Mammary epithelial cell (primary cell): ENCODE measurements at regions of chr12 and their contacts with region 1.

Region 1: DNA sequence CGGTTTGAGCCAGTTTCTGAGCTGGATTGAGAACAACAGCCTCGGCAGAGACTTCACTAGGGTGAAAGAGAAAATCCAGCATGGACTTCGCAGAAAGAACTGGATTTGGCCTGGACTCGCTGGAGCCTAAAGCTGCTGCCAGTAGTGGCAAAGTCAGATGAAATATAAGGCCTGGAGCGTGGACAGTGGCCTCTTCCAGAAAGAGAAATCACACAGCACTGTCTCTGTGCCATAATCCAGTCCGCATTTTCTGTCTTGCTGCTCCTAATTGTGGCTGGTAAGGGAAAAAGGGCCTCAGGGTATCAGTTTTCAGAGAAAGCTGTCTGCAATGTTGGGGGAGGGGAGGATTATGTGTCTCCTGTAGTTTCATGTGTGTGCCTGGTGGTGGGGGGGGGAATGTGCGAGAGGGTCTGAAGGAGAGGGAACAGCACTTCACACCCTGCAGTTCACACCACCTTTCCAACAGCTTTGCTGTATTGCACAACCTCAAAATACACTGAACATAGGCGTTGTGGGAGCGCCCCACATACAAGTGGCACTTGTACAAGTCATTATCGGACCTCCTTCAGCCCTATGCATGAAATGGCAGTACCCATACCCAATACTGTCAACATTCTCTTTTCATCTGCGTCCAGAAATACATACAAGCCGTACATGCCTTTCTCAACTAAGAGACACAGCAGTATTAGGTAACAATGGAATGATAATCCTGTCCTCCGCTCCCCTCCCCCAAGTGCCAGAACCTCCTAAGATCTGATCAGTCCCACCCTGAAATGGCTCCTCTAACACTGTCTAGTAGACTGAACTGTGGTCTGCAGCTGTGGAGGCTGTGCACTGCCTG is 107.5 kb upstream of the ATF7IP start:
- DNase-seq: peak; percentile 96
- H3K4me3 ChIP-seq: no peak overlapping the region
- H3K27ac ChIP-seq: peak overlapping the region; percentile 69
- H3K4me1 ChIP-seq: peaks cover 32% of the 10 kb centered on the region
- H3K27me3 ChIP-seq: no peaks in the 10 kb centered on the region
- CTCF ChIP-seq: no peak

Region 2: GRCh38 chr12:13635709-13636108 is 622.2 kb before region 1 on chr12:
- CTCF ChIA-PET with region 1: no interaction called
- dilution Hi-C with region 1: no loop called
- in situ Hi-C with region 1: no loop called
- intact Hi-C with region 1: no loop called
- DNase-seq: no peak
- H3K4me3 ChIP-seq: no peak overlapping the region
- H3K27ac ChIP-seq: no peak overlapping the region
- H3K4me1 ChIP-seq: no peaks in the 10 kb centered on the region
- H3K27me3 ChIP-seq: peaks cover 2% of the 10 kb centered on the region
- CTCF ChIP-seq: no peak

Region 3: DNA sequence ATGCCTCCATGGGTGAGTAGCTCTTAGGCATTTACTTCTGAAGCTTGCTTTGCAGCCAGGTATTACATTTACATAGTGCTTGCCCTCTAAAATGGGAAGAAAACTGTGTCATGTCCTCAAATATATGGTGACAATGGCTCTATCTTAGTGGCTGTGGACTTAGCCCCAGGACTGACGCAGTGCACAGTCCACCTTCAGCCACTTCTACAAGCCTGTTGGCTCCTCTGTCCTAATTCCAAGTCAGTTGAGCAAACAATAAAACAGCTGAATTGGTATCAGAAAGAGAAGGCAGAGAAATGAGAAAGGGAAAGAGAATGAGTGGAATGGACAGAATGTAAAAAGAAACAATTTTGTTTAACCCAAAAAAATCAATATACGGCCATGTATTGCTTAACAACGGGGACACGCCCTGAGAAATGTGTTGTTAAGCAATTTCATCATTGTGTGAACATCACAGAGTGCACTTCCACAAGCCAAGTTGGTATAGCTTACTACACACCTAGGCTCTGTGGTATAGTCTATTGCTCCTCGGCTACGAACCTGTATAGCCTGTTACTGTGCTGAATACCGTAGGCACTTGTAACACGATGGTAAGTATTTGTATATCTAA is 370.1 kb before region 1 on chr12:
- CTCF ChIA-PET with region 1: no interaction called
- dilution Hi-C with region 1: no loop called
- in situ Hi-C with region 1: no loop called
- intact Hi-C with region 1: no loop called
- DNase-seq: no peak
- H3K4me3 ChIP-seq: no peak overlapping the region
- H3K27ac ChIP-seq: no peak overlapping the region
- H3K4me1 ChIP-seq: no peaks in the 10 kb centered on the region
- H3K27me3 ChIP-seq: no peaks in the 10 kb centered on the region
- CTCF ChIP-seq: no peak

Region 4: DNA sequence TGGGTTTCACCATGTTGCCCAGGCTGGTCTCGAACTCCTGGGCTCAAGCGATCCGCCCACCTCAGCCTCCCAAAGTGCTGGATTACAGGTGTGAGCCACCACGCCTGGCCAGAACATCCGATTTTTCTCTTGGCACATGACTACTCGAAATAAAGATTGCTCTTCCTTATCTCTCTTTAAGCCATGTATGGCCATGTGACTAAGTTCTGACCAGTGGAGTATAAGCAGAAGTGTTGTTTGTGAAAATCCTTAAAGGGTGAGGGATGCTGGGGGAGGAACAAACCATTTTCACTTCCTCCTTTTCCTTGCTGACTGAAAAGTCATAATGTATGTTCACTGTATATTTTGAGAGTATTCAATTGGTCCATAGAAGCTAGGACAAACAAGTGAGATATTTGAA is 56.8 kb after region 1 on chr12:
- CTCF ChIA-PET with region 1: no interaction called
- dilution Hi-C with region 1: no loop called
- in situ Hi-C with region 1: no loop called
- intact Hi-C with region 1: loop called (anchors 5 kb)
- DNase-seq: no peak
- H3K4me3 ChIP-seq: no peak overlapping the region
- H3K27ac ChIP-seq: no peak overlapping the region
- H3K4me1 ChIP-seq: peaks cover 10% of the 10 kb centered on the region
- H3K27me3 ChIP-seq: no peaks in the 10 kb centered on the region
- CTCF ChIP-seq: no peak

Region 5: GRCh38 chr12:14384783-14385638 is 127.1 kb after region 1 on chr12:
- CTCF ChIA-PET with region 1: no interaction called
- dilution Hi-C with region 1: no loop called
- in situ Hi-C with region 1: no loop called
- intact Hi-C with region 1: loop called (anchors 1 kb)
- DNase-seq: peak; percentile 92
- H3K4me3 ChIP-seq: peak overlapping the region; percentile 29 to 42 (median 31)
- H3K27ac ChIP-seq: peak overlapping the region; percentile 69
- H3K4me1 ChIP-seq: peaks cover 13% of the 10 kb centered on the region
- H3K27me3 ChIP-seq: no peaks in the 10 kb centered on the region
- CTCF ChIP-seq: no peak

Region 6: DNA sequence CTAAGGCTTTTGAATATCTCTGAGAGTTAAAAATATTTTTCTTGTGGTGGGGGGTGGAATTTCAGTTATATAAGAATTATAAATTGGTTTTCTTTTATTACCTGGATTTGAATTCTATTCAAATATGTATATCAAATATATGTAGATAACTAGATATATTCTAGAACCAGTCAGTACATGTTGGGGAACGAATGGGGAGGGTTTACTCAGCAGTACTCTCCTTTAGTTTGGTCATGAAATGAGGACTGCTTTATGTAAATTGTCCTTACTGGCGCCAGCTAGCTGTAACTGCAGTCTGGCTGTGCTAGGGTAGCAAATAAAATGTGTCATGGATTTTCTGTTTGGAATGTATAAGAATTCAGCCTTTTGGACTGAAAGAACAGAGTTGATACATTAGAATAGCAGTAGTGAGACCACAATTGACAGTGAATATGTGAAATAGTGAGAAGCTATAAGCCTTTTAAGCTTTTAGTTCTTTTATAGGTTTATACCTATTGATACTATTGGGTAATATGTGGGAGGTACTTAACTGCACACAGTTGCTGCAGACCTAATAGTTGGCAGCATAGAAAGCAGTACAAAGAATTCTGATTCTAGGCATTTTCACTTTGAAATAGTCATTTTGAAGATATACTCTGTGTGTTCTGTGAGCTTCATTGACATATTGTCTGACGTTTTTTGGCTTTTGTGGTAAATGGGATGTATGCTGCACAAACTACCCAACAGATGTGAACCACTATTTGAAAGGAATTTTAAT is 136.5 kb after region 1 on chr12:
- CTCF ChIA-PET with region 1: no interaction called
- dilution Hi-C with region 1: no loop called
- in situ Hi-C with region 1: no loop called
- intact Hi-C with region 1: loop called (anchors 1 kb)
- DNase-seq: peak; percentile 83
- H3K4me3 ChIP-seq: peak overlapping the region in 1 of 3 experiments; percentile 28
- H3K27ac ChIP-seq: peak overlapping the region; percentile 69
- H3K4me1 ChIP-seq: peaks cover 15% of the 10 kb centered on the region
- H3K27me3 ChIP-seq: no peaks in the 10 kb centered on the region
- CTCF ChIP-seq: no peak

Region 7: DNA sequence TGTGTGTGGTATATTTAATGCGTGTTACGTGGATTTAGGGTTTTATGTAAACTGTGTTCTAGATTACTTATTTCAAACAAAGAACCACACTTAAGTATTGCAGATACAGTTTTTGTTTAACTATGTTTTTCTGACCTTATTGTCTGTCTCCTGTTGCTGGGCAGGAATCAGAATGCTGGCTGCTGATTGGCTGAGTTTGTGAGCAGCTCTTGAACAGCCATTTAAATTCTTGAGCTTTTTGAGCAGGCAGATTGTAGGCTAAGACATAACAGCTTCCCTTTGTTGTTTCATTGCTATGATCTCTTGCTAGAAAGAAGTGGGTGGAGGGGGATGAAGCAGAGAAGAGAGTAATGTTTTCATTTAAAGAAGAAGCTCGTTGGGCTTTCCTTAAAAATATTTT is 159.8 kb after region 1 on chr12:
- CTCF ChIA-PET with region 1: no interaction called
- dilution Hi-C with region 1: no loop called
- in situ Hi-C with region 1: no loop called
- intact Hi-C with region 1: loop called (anchors 1 kb)
- DNase-seq: peak; percentile 74
- H3K4me3 ChIP-seq: no peak overlapping the region
- H3K27ac ChIP-seq: no peak overlapping the region
- H3K4me1 ChIP-seq: peaks cover 10% of the 10 kb centered on the region
- H3K27me3 ChIP-seq: no peaks in the 10 kb centered on the region
- CTCF ChIP-seq: no peak

Region 8: GRCh38 chr12:14454098-14454907 is 196.3 kb after region 1 on chr12:
- CTCF ChIA-PET with region 1: no interaction called
- dilution Hi-C with region 1: no loop called
- in situ Hi-C with region 1: no loop called
- intact Hi-C with region 1: loop called (anchors 1 kb)
- DNase-seq: peak; percentile 44
- H3K4me3 ChIP-seq: no peak overlapping the region
- H3K27ac ChIP-seq: no peak overlapping the region
- H3K4me1 ChIP-seq: no peaks in the 10 kb centered on the region
- H3K27me3 ChIP-seq: no peaks in the 10 kb centered on the region
- CTCF ChIP-seq: peak; percentile 75 to 77